ENCODE measurements at regions of chr22 and their contacts with region 1.

Region 1: GRCh38 chr22:41091132-41092022 is 1.0 kb upstream of the EP300 start:
- DNase-seq: peak; percentile 100

Region 2: GRCh38 chr22:40950962-40951794 is 140.2 kb before region 1 on chr22 and contains the start of gene RBX1:
- intact Hi-C with region 1: loop called (anchors 1 kb)
- DNase-seq: peak; percentile 99
- total RNA-seq, gene RBX1: 59.3 TPM

Region 3: DNA sequence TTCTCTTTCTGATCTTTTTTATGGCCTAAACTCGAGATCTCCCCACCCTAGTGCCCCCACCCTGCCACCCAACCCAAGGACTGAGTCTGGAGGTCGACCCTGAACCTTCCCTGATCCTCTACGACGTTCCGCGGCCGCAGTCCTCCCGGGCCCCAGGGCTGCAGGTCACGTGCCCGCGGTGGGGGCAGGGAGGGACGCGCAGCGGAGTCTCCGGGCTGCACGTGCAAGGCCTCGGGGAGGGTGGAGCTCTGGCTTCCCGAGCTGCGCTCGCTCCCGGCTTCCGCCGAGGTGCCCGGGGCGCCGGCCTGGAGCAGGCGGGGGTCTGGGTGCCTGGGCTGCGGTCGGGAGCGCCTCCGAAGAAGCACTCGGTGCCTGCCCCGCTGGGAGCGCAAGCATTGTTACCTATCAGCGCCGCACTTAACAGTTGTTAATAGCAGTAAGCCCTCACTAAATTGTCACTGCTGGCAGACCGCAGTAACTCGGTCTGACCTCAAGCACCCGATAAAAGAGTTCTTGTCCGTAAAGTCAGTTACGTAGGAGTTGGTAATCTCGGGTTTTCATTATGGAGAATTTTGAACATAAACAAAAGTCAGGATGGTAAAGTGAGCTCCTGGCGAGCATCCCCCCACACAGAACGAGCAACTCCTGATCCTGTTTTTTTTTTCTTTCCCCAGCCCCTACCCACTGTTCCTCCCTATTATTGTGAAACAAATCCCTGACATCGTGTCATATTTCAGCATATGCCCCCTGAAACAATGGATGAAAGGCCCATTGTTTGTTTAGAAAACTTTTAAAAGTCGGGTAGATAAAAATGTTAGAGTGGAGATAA is 68.7 kb before region 1 on chr22:
- intact Hi-C with region 1: loop called (anchors 1 kb)
- DNase-seq: peak; percentile 96

Region 4: DNA sequence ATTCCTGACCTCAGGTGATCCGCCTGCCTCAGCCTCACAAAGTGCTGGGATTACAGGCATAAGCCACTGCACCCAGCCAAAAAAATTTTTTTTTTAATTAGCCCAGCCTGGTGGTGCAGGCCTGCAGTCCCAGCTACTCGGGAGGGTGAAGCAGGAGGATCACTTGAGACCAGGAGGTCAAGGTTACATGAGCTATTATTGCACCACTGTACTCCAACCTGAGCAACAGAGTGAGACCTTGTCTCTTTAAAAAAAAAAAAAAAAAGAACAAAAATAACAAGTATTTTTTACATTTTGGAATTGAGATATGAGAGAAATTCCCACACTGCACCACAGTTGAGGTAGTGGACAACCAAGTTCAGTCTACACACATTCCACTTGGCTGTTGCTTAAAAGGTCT is 100.1 kb after region 1 on chr22:
- intact Hi-C with region 1: no loop called
- DNase-seq: no peak

Region 5: DNA sequence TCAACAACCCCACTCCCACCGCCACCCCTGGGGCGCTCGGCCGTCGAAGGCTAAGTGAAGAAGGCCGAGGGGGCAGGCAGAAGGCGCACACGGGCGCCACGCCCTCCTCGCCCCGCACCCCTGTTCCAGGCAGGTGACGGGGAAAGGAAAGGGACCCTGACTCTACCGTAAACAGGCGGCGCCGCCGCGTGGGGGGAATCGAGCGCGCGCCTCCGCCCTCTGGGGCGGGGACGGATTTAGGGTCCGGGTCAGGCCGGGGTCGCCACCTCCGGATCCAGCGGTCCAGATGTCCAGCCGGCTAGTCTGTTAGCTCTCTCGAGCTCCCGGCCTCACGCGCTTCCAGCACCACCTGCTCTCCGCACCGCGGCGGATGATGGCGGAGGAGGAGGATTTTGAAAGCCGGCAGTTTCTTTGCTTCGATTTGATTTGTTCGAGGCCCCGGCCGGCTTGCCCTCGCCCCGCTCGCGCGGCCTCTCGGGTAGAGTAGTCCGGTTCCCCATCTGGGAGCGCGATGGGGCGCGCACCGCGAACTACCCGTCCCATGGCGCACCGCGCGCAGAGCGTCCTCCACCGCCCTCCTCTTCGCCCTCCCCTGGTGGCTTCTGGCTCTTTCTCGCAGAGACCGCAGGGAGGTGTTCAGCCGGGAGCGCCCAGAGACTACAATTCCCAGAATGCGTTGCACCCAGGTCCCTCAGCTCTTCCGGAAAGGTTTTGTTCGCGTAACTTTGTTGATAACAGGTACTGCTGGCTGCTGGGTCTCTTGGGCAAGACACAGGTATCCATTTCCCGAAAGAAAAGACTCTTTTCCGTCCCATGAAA is 194.7 kb after region 1 on chr22 and contains the start of gene RANGAP1:
- intact Hi-C with region 1: loop called (anchors 2 kb)
- DNase-seq: peak; percentile 100
- total RNA-seq, gene RANGAP1: 32.8 TPM

Region 6: DNA sequence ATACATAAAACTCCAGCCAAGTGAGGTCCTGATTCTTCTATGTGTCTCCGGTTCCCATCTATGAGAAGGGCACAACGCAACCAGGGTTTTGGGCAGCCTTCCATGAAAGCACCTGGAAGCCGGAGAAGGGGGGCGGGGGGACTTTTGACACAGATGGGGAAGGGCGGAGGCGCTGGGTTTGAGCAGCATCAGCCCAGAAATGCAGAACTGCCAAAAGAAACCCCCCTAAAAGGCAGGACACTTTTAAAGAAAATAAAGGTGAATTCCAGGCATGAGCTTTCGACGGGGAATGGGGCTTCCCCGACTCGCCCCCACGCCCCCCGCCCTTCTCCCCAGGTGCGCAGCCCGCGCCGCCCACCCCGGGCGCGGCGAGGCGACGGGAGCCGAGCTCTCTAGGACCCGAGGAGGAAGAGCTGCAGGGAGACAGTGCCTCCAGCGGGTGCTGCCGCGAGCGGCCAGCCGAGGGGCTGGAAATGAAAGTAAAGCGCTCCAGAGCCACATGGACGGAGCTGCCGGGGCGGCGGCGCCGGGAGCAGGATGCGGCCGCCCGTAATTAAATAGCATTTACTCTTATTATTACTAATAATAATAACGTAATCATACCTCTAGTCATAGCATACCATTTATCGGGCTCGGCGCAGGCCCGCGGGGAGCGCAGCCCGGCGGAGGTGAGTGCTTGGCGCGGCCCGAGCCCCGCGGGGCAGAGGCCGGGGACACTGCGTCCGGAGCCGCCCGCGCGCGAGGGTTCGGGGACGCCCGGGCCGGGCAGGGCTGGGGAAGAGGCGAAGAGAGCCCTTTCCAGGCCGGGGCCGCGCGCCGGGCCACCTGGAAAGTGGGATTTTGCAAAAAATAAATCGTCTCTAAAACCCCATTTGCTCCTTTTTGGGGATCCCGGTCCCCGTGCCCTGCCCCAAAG is 210.0 kb after region 1 on chr22 and contains the start of gene ZC3H7B:
- intact Hi-C with region 1: loop called (anchors 5 kb)
- DNase-seq: peak; percentile 94
- total RNA-seq, gene ZC3H7B: 37.2 TPM

Region 7: GRCh38 chr22:41448189-41448808 is 356.9 kb after region 1 on chr22:
- intact Hi-C with region 1: loop called (anchors 5 kb)
- DNase-seq: peak; percentile 96